ENCODE measurements at regions of chr1 and their contacts with region 1.

Region 1: GRCh38 chr1:157490467-157491165 is 61.7 kb downstream of the FCRL5 start:
- DNase-seq: peak; percentile 61 to 86 (median 78)
- H3K4me3 ChIP-seq: no peak overlapping the region
- H3K27ac ChIP-seq: no peak overlapping the region
- H3K4me1 ChIP-seq: no peaks in the 10 kb centered on the region
- H3K27me3 ChIP-seq: no peaks in the 10 kb centered on the region
- CTCF ChIP-seq: peak; percentile 36 to 61 (median 47)
- POLR2A ChIP-seq: no peak

Region 2: GRCh38 chr1:157170677-157171515 is 319.7 kb before region 1 on chr1:
- intact Hi-C with region 1: loop called in 1 of 2 experiments (anchors 10 kb)
- DNase-seq: peak in 4 of 7 donors; percentile 26 to 63 (median 51)
- H3K4me3 ChIP-seq: no peak overlapping the region
- H3K27ac ChIP-seq: no peak overlapping the region
- H3K4me1 ChIP-seq: no peaks in the 10 kb centered on the region
- H3K27me3 ChIP-seq: peaks cover 5% of the 10 kb centered on the region
- CTCF ChIP-seq: peak in 5 of 6 experiments; percentile 6 to 47 (median 31)
- POLR2A ChIP-seq: no peak

Region 3: DNA sequence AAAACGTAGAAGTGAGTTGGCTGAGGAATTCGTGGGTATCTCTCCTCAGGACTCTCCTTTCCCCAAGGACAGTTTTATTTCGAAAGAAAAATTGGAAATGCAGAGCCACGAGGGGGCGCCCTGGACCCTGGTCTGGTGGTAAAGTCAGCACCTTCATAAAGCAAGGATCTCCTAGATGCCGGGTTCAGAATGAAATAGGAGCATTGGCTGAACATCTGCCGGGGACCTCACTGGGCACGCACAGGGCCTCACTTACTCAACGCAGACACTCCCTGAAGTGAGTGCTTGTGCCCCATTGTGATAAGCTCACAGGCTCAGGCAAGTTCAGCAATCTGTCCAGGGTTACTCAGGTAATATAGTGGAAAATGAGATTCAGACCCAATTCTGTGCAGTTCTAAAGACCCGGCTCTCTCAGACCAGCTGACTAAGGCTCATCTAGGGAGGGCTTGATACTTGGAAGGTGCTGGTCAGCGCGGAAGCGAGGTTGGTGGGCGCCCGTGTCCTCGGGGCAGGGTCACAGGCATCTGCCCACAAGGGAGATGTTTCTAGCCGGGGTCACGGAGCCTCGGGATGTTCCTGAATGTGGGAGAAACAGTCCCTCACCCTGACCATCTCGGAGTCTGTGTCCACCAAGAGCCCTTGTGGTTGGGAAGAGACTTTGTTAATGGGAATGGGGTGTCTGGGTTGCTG is 296.8 kb before region 1 on chr1:
- intact Hi-C with region 1: loop called (anchors 10 kb)
- DNase-seq: peak; percentile 44 to 80 (median 69)
- H3K4me3 ChIP-seq: no peak overlapping the region
- H3K27ac ChIP-seq: no peak overlapping the region
- H3K4me1 ChIP-seq: no peaks in the 10 kb centered on the region
- H3K27me3 ChIP-seq: peaks cover 24% of the 10 kb centered on the region
- CTCF ChIP-seq: peak; percentile 13 to 61 (median 46)
- POLR2A ChIP-seq: no peak

Region 4: GRCh38 chr1:157369808-157370521 is 120.7 kb before region 1 on chr1:
- intact Hi-C with region 1: loop called (anchors 5 kb)
- DNase-seq: peak; percentile 27 to 64 (median 40)
- H3K4me3 ChIP-seq: no peak overlapping the region
- H3K27ac ChIP-seq: no peak overlapping the region
- H3K4me1 ChIP-seq: no peaks in the 10 kb centered on the region
- H3K27me3 ChIP-seq: peaks cover 3% of the 10 kb centered on the region
- CTCF ChIP-seq: peak; percentile 66 to 93 (median 76)
- POLR2A ChIP-seq: no peak

Region 5: GRCh38 chr1:157380523-157380922 is 110.1 kb before region 1 on chr1:
- intact Hi-C with region 1: loop called in 1 of 2 experiments (anchors 5 kb)
- DNase-seq: no peak
- H3K4me3 ChIP-seq: no peak overlapping the region
- H3K27ac ChIP-seq: no peak overlapping the region
- H3K4me1 ChIP-seq: no peaks in the 10 kb centered on the region
- H3K27me3 ChIP-seq: peaks cover 5% of the 10 kb centered on the region
- CTCF ChIP-seq: no peak
- POLR2A ChIP-seq: no peak

Region 6: GRCh38 chr1:157542676-157543075 is 52.1 kb after region 1 on chr1:
- intact Hi-C with region 1: no loop called
- DNase-seq: peak in 2 of 7 donors; percentile 23 to 24
- H3K4me3 ChIP-seq: no peak overlapping the region
- H3K27ac ChIP-seq: no peak overlapping the region
- H3K4me1 ChIP-seq: no peaks in the 10 kb centered on the region
- H3K27me3 ChIP-seq: peaks cover 3% of the 10 kb centered on the region
- CTCF ChIP-seq: no peak
- POLR2A ChIP-seq: no peak

Region 7: GRCh38 chr1:157758018-157758417 is 267.4 kb after region 1 on chr1:
- intact Hi-C with region 1: no loop called
- DNase-seq: no peak
- H3K4me3 ChIP-seq: no peak overlapping the region
- H3K27ac ChIP-seq: no peak overlapping the region
- H3K4me1 ChIP-seq: no peaks in the 10 kb centered on the region
- H3K27me3 ChIP-seq: no peaks in the 10 kb centered on the region
- CTCF ChIP-seq: no peak
- POLR2A ChIP-seq: no peak

Measured in adrenal gland (tissue), 19 donors.